Left lung (tissue), 14 donors: ENCODE measurements at regions of chr6 and their contacts with region 1.

Region 1: GRCh38 chr6:12289933-12290820 is at the start of gene EDN1:
- DNase-seq: peak; percentile 64 to 96 (median 86)
- ATAC-seq: peak; percentile 75
- H3K4me3 ChIP-seq: peak within 1 kb of the TSS; percentile 30 to 48
- H3K27ac ChIP-seq: peak within 1 kb of the TSS; percentile 66 to 81
- H3K4me1 ChIP-seq: peaks cover 0 to 53% of the 10 kb centered on the region in 2 donors
- H3K27me3 ChIP-seq: peaks cover 0 to 23% of the 10 kb centered on the region in 2 donors
- CTCF ChIP-seq: peak in 1 of 2 donors; percentile 61
- polyA plus RNA-seq, gene EDN1: 35.4 to 58.9 (median 42.7) TPM

Region 2: GRCh38 chr6:11653028-11653583 is 637.1 kb before region 1 on chr6:
- intact Hi-C with region 1: loop called in 1 of 2 experiments (anchors 10 kb)
- DNase-seq: peak in 1 of 4 donors; percentile 35
- ATAC-seq: peak; percentile 60
- H3K4me3 ChIP-seq: no peak overlapping the region
- H3K27ac ChIP-seq: no peak overlapping the region
- H3K4me1 ChIP-seq: peaks cover 0 to 28% of the 10 kb centered on the region in 2 donors
- H3K27me3 ChIP-seq: no peaks in the 10 kb centered on the region
- CTCF ChIP-seq: no peak

Region 3: DNA sequence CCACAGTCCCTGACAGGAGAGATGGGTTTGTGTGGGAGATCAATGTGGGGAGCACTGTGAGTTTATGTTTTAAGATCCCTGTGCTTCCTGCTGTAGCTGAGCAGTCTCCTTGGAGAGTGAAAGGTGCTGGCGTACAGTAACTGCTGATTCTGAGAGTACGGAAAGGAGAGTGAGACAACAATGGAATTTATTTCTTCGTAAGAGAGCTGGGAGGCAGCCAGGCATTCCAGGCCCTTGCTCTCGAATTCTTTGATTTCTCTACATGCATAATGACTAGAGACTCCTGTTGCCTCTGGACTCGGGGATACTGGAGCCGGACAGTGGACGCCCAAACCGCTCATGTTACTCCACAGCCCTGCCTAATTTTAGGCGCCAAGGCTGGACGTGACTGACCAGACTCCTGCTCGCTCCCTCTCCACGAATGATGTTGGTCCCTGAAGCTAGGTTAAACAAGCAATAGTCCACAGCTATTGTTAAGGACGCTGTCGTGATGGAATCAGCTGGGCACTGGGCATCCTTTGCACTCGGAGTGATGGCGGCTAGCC is 295.4 kb after region 1 on chr6:
- intact Hi-C with region 1: loop called in 1 of 2 experiments (anchors 10 kb)
- DNase-seq: peak in 1 of 4 donors; percentile 43
- ATAC-seq: peak; percentile 88
- H3K4me3 ChIP-seq: no peak overlapping the region
- H3K27ac ChIP-seq: peak overlapping the region; percentile 29 to 63
- H3K4me1 ChIP-seq: peaks cover 0 to 5% of the 10 kb centered on the region in 2 donors
- H3K27me3 ChIP-seq: no peaks in the 10 kb centered on the region
- CTCF ChIP-seq: no peak

Region 4: DNA sequence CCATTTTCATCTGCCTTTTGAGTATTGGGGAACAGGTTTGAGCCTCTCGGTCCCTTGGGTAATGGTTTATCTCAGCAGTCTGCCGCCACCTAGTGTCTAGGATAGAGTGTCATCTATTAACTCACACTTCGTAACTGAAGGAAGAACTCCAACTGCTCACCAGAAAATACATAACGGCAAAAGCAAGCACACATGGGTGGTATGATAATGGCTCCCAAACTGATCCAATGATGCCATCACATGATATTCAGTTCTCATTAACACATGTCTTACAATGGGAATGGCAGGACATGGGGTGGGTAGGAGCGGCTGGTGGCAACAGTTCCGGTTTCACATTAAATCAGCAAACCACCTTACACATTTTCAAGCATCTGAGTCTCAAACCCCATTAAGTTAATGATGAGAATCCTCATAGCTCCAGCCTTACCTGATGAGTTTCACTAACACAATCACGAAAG is 315.7 kb after region 1 on chr6:
- intact Hi-C with region 1: loop called in 1 of 2 experiments (anchors 5 kb)
- DNase-seq: peak in 3 of 4 donors; percentile 23 to 71 (median 35)
- ATAC-seq: peak; percentile 89
- H3K4me3 ChIP-seq: no peak overlapping the region
- H3K27ac ChIP-seq: no peak overlapping the region
- H3K4me1 ChIP-seq: peaks cover 0 to 23% of the 10 kb centered on the region in 2 donors
- H3K27me3 ChIP-seq: no peaks in the 10 kb centered on the region
- CTCF ChIP-seq: peak; percentile 46 to 48